ENCODE measurements at regions of chr3 and their contacts with region 1.

Region 1: DNA sequence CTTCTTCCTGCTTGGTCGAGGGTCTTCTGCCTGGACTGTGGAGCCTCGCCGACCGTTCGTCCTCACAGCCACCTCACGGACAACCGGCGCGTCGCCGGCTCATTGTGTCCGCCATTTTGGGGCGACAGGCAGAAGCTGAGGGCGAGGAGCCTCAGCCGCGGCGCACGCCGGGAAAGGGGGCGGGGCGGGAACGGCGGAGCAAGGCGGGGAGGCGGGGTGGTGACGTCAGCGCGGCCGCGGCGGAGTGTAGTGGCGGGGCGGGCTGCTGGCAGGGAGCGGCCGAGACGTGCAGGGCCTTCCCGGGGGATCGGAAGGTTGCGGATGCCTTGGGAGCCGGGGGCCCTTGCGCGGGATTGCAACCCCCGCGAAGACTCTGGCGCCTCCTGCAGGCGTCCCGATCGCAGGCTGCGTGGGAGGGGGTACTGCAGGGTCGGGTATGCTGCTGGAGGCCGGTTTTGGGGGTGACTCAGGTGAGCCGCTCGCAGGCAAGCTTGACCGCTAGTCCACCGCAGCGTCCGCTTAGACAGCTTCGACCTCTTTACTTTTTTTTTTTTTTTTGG is at the start of gene WDR82:
- DNase-seq: peak; percentile 85 to 99
- H3K4me3 ChIP-seq: peak within 1 kb of the TSS; percentile 94 to 99 (median 97)
- H3K27ac ChIP-seq: peak within 1 kb of the TSS; percentile 98
- H3K4me1 ChIP-seq: peaks cover 0 to 3% (median under 1%) of the 10 kb centered on the region in 4 experiments; a peak in 3 of 7 replicates
- H3K27me3 ChIP-seq: no peaks in the 10 kb centered on the region
- CTCF ChIP-seq: peak; percentile 58 to 74 (median 68)
- EP300 ChIP-seq: no peak
- POLR2A ChIP-seq: peak; percentile 96 to 97
- RAD21 ChIP-seq: peak; percentile 23 to 45; a peak in 3 of 4 replicates
- total RNA-seq, gene WDR82: 77.2 and 82.7 TPM in 2 replicates

Region 2: GRCh38 chr3:52231502-52232293 is 46.9 kb before region 1 on chr3:
- CTCF ChIA-PET with region 1: interaction called, 29 read pairs
- POLR2A ChIA-PET with region 1: interaction called, 69 read pairs
- DNase-seq: peak in 1 of 2 experiments; percentile 97
- H3K4me3 ChIP-seq: no peak overlapping the region
- H3K27ac ChIP-seq: no peak overlapping the region
- H3K4me1 ChIP-seq: peaks cover 0 to 11% (median 5%) of the 10 kb centered on the region in 4 experiments; a peak in 5 of 7 replicates
- H3K27me3 ChIP-seq: no peaks in the 10 kb centered on the region
- CTCF ChIP-seq: peak in 2 of 3 experiments; percentile 84 to 98; a peak in 3 of 4 replicates
- EP300 ChIP-seq: no peak
- POLR2A ChIP-seq: no peak
- RAD21 ChIP-seq: peak; percentile 79 to 81

Region 3: GRCh38 chr3:52245322-52246263 is 33.0 kb before region 1 on chr3 and contains the start of gene PPM1M:
- CTCF ChIA-PET with region 1: interaction called, 9 read pairs
- POLR2A ChIA-PET with region 1: interaction called, 69 read pairs
- DNase-seq: peak in 1 of 2 experiments; percentile 83
- H3K4me3 ChIP-seq: peak within 1 kb of the TSS; percentile 32 to 58 (median 51)
- H3K27ac ChIP-seq: no peak within 1 kb of the TSS
- H3K4me1 ChIP-seq: peaks cover 5 to 18% (median 14%) of the 10 kb centered on the region in 4 experiments
- H3K27me3 ChIP-seq: peaks cover 6 to 37% (median 23%) of the 10 kb centered on the region in 4 experiments; a peak in 6 of 7 replicates
- CTCF ChIP-seq: no peak
- EP300 ChIP-seq: no peak
- POLR2A ChIP-seq: no peak
- RAD21 ChIP-seq: no peak
- total RNA-seq, gene PPM1M: 5.2 and 5.4 TPM in 2 replicates

Region 4: GRCh38 chr3:52268036-52268435 is 10.6 kb before region 1 on chr3:
- CTCF ChIA-PET with region 1: interaction called, 5 read pairs
- POLR2A ChIA-PET with region 1: interaction called, 10 read pairs
- DNase-seq: no peak
- H3K4me3 ChIP-seq: no peak overlapping the region
- H3K27ac ChIP-seq: no peak overlapping the region
- H3K4me1 ChIP-seq: no peaks in the 10 kb centered on the region
- H3K27me3 ChIP-seq: no peaks in the 10 kb centered on the region
- CTCF ChIP-seq: no peak
- EP300 ChIP-seq: no peak
- POLR2A ChIP-seq: no peak
- RAD21 ChIP-seq: no peak

Region 5: DNA sequence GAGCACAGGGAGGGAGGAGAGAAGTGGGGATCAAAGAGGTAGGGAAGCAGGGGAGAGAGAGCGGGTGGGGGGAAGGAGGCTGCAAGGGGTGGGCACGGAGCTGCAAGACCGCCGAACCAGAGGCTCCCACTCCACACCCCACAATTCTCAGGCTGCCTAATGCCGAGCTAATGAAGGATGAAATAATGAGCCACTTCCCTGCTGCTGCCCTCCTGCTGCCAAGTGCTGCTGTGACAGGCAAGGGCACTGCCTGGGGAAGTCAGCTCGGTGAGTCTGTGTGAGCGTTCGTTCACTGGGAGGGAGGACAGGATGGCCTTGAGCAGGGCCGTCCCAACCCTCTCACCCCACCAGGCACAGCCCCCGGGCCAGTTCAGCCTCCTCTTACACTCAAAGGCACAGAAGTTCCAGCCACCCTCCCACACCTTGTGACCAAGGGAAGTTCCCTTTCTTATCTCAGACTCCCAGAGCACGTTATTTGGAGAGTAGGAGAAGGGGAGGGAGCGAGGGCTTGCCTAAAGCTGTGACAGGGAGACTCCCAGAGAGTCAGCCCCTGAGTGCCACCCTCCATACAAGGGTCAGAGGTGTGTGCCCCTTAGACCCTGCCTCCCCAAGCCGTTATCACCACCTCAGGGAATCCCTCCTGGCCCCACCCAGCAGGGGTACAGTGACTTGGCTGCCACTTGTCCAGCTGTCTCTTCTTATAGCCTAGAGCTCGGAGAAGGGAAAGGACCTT is 21.5 kb after region 1 on chr3:
- CTCF ChIA-PET with region 1: interaction called, 14 read pairs
- POLR2A ChIA-PET with region 1: interaction called, 39 read pairs
- DNase-seq: peak in 1 of 2 experiments; percentile 67
- H3K4me3 ChIP-seq: peak overlapping the region; percentile 7 to 57 (median 44); a peak in 7 of 8 replicates
- H3K27ac ChIP-seq: no peak overlapping the region
- H3K4me1 ChIP-seq: peaks cover 0 to 26% (median 20%) of the 10 kb centered on the region in 4 experiments; a peak in 6 of 7 replicates
- H3K27me3 ChIP-seq: peaks cover 0 to 8% (median 2%) of the 10 kb centered on the region in 4 experiments; a peak in 3 of 7 replicates
- CTCF ChIP-seq: peak in 1 of 3 experiments; percentile 15; a peak in 1 of 4 replicates
- EP300 ChIP-seq: no peak
- POLR2A ChIP-seq: no peak
- RAD21 ChIP-seq: no peak

Measured in H1 (cell line).